ENCODE measurements at regions of chr1 and their contacts with region 1.

Region 1: DNA sequence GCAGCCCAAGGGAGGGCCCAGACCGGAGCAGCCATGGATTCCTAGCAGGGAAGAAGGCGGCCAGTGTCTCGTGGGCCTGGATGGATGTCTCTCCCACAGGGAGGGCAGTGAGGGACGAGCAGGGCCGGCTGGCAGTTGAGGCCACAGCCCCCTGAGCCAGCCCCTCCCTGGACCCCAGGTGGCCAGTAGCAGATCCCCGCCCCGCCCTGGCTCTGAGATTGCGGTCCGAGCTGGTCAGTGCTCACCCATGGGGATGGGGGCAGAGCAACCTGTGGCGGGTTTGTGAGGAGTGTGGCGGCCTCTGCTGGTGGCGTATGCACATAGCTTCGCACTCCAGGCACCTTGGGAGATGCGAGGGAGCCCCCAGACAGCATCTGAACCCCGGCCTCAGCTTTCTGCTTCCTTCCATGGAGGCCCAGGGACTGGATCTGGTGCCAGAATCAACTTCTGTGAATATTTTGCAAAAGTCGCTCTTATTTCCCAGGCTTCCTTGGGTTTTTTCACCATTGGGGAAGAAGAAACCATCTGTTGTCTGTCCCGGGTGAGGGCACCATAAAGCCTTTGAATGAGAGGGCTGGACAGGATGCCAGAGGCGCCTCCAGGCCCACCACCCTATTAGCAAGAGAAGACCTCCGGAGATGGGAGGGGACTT is 8.4 kb upstream of the KCNN3 start:
- DNase-seq: peak; percentile 76
- H3K4me3 ChIP-seq: no peak overlapping the region
- H3K27ac ChIP-seq: no peak overlapping the region
- H3K4me1 ChIP-seq: no peaks in the 10 kb centered on the region
- H3K27me3 ChIP-seq: no peaks in the 10 kb centered on the region
- CTCF ChIP-seq: peak; percentile 66

Region 2: DNA sequence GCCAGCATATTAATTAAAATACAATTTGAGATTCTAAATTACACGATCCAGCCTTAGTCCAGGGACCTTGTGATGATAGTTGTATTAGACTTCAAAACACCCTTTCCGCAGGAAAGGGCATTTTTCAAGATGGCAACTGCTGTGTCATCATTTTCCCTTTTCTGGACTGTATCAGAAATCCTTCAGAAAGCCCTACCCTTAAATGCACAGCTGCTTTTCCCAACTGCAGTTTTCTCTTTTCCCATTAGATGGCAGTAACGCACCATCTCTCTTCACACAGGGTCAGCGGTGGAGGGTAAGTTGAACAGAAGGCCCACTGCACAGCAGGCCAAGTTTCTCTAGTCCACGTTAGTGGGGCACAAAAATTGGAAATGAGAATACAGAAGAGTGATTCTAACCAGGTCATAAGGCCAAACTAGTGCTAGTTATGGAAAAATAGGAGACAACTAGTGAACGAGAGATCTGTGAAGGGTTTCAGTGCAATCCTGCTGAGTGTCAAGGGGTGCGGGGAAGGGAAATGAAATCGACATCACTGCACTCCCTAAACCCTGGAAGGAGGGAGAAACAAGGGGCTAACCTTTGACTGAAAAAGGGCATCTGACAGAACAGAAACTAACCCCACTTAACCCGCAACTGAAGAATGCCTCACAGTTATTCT is 398.6 kb before region 1 on chr1:
- intact Hi-C with region 1: loop called (anchors 2 kb)
- DNase-seq: peak; percentile 83
- H3K4me3 ChIP-seq: no peak overlapping the region
- H3K27ac ChIP-seq: no peak overlapping the region
- H3K4me1 ChIP-seq: no peaks in the 10 kb centered on the region
- H3K27me3 ChIP-seq: no peaks in the 10 kb centered on the region
- CTCF ChIP-seq: peak; percentile 90

Region 3: GRCh38 chr1:154558575-154559465 is 319.7 kb before region 1 on chr1 and contains the start of gene UBE2Q1:
- intact Hi-C with region 1: loop called (anchors 5 kb)
- DNase-seq: peak; percentile 99
- H3K4me3 ChIP-seq: peak within 1 kb of the TSS; percentile 94
- H3K27ac ChIP-seq: peak within 1 kb of the TSS; percentile 88
- H3K4me1 ChIP-seq: peaks cover 7% of the 10 kb centered on the region
- H3K27me3 ChIP-seq: no peaks in the 10 kb centered on the region
- CTCF ChIP-seq: no peak
- total RNA-seq, gene UBE2Q1: 74.1 to 86.1 TPM

Region 4: DNA sequence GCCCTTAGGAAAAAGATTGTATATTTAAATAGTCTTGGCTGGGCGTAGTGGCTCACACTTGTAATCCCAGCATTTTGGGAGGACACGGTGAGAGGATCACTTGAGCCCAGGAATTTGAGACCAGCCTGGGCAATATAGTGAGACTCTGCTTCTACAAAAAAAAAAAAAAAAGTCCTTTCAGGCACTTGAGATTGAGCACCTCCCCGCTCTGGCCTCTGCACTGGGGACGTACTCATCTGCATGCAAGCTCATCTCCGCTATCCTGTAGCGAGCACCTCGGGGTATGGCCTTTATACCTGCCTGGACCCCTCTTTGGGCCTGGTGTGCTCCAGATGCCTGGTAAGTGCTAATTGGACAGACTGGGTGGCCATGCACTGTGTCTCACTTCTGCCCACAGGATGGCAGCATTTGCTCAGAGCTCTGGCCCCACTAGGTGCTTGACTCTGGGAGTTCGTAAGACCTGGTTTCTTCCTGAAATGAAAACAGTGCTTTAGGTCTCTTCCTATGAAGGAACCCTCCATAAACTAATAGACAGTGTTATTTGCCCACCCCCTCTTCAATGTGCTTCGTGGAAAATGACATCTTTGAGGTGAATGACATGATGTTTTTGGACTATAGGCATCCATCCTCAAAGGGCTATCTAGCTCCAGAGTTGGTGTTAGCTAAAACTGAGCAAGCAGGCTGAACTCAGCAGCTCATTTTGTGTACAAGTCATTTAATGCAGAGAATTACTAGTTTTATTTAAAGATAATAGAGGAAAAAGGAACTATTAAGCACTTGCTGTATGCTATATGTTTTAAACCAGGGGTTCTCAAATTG is 208.8 kb before region 1 on chr1:
- intact Hi-C with region 1: loop called (anchors 2 kb)
- DNase-seq: peak; percentile 61
- H3K4me3 ChIP-seq: no peak overlapping the region
- H3K27ac ChIP-seq: no peak overlapping the region
- H3K4me1 ChIP-seq: no peaks in the 10 kb centered on the region
- H3K27me3 ChIP-seq: no peaks in the 10 kb centered on the region
- CTCF ChIP-seq: peak; percentile 60

Region 5: GRCh38 chr1:154695985-154696384 is 182.5 kb before region 1 on chr1:
- intact Hi-C with region 1: no loop called
- DNase-seq: no peak
- H3K4me3 ChIP-seq: no peak overlapping the region
- H3K27ac ChIP-seq: no peak overlapping the region
- H3K4me1 ChIP-seq: no peaks in the 10 kb centered on the region
- H3K27me3 ChIP-seq: peaks cover 3% of the 10 kb centered on the region
- CTCF ChIP-seq: no peak

Region 6: GRCh38 chr1:154760469-154760933 is 118.0 kb before region 1 on chr1:
- intact Hi-C with region 1: loop called (anchors 5 kb)
- DNase-seq: peak; percentile 79
- H3K4me3 ChIP-seq: peak overlapping the region; percentile 40
- H3K27ac ChIP-seq: no peak overlapping the region
- H3K4me1 ChIP-seq: no peaks in the 10 kb centered on the region
- H3K27me3 ChIP-seq: peaks cover 20% of the 10 kb centered on the region
- CTCF ChIP-seq: peak; percentile 71

Region 7: GRCh38 chr1:154951901-154952662 is 73.6 kb after region 1 on chr1:
- intact Hi-C with region 1: no loop called
- DNase-seq: no peak
- H3K4me3 ChIP-seq: no peak overlapping the region
- H3K27ac ChIP-seq: peak overlapping the region; percentile 27
- H3K4me1 ChIP-seq: peaks cover 7% of the 10 kb centered on the region
- H3K27me3 ChIP-seq: no peaks in the 10 kb centered on the region
- CTCF ChIP-seq: no peak